Transverse colon (tissue), 4 donors: ENCODE measurements at regions of chr1 and their contacts with region 1.

Region 1: DNA sequence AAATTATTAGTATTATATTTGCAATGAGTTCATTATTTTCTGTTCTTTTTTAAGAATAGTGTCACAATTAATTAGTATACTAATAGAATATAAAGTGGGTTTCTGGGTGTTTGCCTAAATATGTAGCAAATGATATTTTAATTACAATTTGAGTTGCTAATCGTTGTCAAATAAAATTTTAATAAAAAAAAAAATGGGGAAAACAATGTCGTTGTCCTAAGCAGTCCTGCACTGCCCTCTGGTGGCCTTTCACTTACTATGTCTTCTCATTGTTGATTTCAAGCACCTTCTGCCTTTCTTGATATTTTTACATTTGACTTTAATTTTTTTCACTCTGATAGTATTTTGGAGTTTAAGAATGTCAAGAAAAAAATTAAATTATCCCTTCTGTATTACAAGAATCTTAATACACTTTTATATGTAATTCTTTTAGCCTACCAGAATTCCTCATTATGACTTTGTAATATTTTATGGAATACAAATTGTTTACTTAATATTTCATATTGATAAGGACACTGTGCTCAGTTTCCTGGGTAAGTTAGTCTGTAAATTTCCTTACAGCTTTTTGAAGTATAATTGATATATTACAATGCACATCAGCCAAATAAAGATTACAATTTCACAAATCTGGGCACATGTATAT is 104.5 kb upstream of the FMN2 start:
- DNase-seq: peak; percentile 52
- H3K4me3 ChIP-seq: no peak overlapping the region
- H3K27ac ChIP-seq: no peak overlapping the region
- H3K4me1 ChIP-seq: no peaks in the 10 kb centered on the region
- H3K27me3 ChIP-seq: no peaks in the 10 kb centered on the region
- CTCF ChIP-seq: peak; percentile 49 to 78 (median 76)
- EP300 ChIP-seq: no peak
- POLR2A ChIP-seq: no peak

Region 2: GRCh38 chr1:239951511-239952140 is 35.6 kb before region 1 on chr1:
- in situ Hi-C with region 1: no loop called
- intact Hi-C with region 1: loop called (anchors 2 kb)
- DNase-seq: peak; percentile 65
- H3K4me3 ChIP-seq: no peak overlapping the region
- H3K27ac ChIP-seq: no peak overlapping the region
- H3K4me1 ChIP-seq: peaks cover 0 to 5% (median 0%) of the 10 kb centered on the region in 4 donors
- H3K27me3 ChIP-seq: no peaks in the 10 kb centered on the region
- CTCF ChIP-seq: peak; percentile 68 to 78 (median 72)
- EP300 ChIP-seq: no peak
- POLR2A ChIP-seq: no peak